HepG2 (cell line): ENCODE measurements at regions of chr9 and their contacts with region 1.

Region 1: GRCh38 chr9:104927912-104928740 is at the start of gene ABCA1:
- DNase-seq: peak; percentile 85
- ATAC-seq: peak; percentile 66
- H3K4me3 ChIP-seq: peak within 1 kb of the TSS; percentile 70 to 86 (median 85)
- H3K27ac ChIP-seq: peak within 1 kb of the TSS; percentile 79
- H3K4me1 ChIP-seq: peaks cover 51% of the 10 kb centered on the region
- H3K27me3 ChIP-seq: no peaks in the 10 kb centered on the region; a peak in 1 of 5 replicates
- CTCF ChIP-seq: no peak
- EP300 ChIP-seq: 0 out of 4 replicates have a peak, but pooled peaks of 1 of the 2 experiments have one; percentile 20
- POLR2A ChIP-seq: peak; percentile 81 to 94
- RAD21 ChIP-seq: 0 out of 2 replicates have a peak, but pooled peaks have one; percentile 20
- total RNA-seq, gene ABCA1: 40.0 and 63.8 TPM in 2 replicates

Region 2: DNA sequence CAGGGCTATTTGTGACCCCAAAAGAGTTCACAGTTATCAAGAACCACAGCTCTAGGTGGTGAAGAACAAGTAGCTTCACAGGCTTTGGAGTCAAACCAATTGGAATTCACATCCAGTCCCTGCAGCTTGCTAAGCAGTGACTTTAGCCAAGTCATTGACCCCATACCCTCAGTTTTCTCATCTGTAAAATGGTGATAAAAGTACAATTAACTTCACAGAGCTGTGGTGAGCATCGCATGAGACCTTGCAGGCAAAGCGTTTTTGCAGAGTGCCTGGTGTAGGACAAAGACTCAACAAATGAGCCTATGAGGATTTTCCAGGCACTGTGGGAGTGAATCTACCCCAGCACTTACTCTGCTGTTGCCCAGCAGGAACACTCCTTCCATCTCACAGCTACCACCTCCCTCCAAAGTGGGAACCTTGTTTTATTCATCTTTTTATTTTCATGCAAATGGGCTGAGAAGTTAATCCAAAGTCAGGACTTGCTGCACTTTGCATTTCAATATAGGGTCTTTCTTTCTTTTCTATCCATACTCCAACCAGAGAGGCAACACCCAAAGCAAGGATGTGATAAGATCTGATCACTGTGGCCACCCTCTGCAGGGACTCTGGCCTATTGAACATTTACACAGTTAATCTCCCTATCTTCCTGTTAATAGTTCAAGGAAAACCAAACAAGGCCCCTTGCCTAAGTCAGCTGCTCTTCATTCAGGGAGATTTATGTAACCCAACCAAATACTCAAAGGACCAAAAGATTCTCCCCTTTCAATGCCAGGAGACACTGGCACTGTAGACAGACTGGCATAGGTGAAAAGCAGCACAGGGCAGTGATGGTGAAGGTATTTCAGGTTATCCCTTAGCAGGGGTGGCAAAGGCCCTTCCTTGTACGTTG is 42.1 kb before region 1 on chr9:
- CTCF ChIA-PET with region 1: no interaction called
- POLR2A ChIA-PET with region 1: interaction called, 19 read pairs
- in situ Hi-C with region 1: no loop called
- intact Hi-C with region 1: loop called (anchors 1 kb)
- DNase-seq: peak; percentile 93
- ATAC-seq: peak; percentile 72
- H3K4me3 ChIP-seq: peak overlapping the region in 1 of 3 experiments; percentile 49; a peak in 1 of 6 replicates
- H3K27ac ChIP-seq: peak overlapping the region; percentile 85
- H3K4me1 ChIP-seq: peaks cover 97% of the 10 kb centered on the region
- H3K27me3 ChIP-seq: no peaks in the 10 kb centered on the region
- CTCF ChIP-seq: no peak
- EP300 ChIP-seq: peak; percentile 76 to 98; a peak in 3 of 4 replicates
- POLR2A ChIP-seq: peak; percentile 33; a peak in 1 of 4 replicates
- RAD21 ChIP-seq: no peak

Region 3: DNA sequence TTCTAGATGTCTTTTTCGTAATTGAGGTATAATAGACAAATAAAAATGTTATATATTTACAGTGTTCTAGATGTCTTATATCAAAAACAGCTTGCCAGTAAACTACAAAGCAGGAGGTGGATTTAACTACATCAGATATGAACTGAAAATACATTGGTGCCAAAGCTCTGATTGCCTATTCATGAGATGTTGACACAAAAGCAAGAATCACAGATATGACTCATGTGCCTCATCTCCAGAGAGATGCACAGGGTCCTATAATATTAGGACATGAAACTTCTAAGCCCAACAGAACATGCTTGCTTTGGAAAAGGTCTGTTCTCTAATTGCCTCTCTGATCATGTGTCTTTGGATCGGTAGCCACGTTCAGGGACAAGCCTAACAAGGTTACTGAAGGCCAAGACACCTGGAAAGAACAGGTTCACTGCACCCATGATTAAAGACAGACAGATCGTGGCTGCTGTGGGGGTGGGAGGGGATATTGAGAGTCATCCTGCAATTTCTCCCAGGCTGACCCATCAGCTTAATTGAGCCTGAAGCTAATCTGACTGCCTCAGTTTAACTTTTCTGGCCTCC is 17.0 kb before region 1 on chr9:
- CTCF ChIA-PET with region 1: no interaction called
- POLR2A ChIA-PET with region 1: interaction called, 19 read pairs
- in situ Hi-C with region 1: no loop called
- intact Hi-C with region 1: no loop called
- DNase-seq: peak; percentile 43
- ATAC-seq: no peak
- H3K4me3 ChIP-seq: no peak overlapping the region
- H3K27ac ChIP-seq: peak overlapping the region; percentile 76
- H3K4me1 ChIP-seq: peaks cover 100% of the 10 kb centered on the region
- H3K27me3 ChIP-seq: no peaks in the 10 kb centered on the region
- CTCF ChIP-seq: no peak
- EP300 ChIP-seq: no peak
- POLR2A ChIP-seq: no peak
- RAD21 ChIP-seq: no peak

Region 4: DNA sequence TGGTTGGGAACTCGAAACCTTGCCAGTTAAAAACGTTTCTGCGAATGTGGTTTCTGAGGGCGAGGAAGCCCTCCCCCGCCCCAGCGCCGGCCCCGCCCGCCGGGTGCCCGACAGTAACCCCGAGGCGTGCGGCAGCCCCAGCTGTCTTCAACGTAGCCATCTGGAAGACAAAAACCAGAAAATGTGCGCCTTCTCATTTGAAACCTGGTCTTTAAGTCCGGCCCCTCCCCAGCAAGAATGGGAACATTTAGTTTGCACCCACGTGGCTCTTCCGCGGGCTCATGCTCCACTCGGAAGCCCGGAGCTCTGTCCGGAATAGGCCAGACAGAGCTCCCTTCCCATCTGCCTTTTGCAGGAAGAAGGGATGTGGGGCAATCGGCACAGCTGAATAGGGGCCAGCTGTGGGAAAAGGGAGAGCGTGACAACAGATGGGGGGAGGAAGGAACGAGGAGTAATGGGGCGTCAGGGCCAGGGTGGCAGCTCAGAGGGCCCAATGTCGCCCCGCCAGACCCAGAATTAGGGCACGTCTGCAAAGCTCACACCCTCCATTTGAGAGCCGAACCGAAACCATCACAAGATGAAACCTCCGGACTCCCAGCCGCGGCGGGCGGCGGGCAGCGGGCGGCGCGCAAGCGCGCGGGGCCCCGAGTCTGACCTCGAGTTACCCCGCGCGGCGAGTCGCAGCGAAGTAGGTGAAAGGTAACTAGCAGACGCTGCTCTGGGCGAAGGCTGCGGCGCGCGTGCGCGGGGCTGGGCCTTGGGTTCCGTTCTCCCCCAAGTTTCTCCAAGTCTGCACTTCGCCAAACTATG is 63.2 kb after region 1 on chr9:
- CTCF ChIA-PET with region 1: no interaction called
- POLR2A ChIA-PET with region 1: interaction called, 8 read pairs
- in situ Hi-C with region 1: no loop called
- intact Hi-C with region 1: loop called (anchors 1 kb)
- DNase-seq: peak; percentile 61
- ATAC-seq: peak; percentile 85
- H3K4me3 ChIP-seq: peak overlapping the region; percentile 62 to 83 (median 71)
- H3K27ac ChIP-seq: peak overlapping the region; percentile 45
- H3K4me1 ChIP-seq: peaks cover 35% of the 10 kb centered on the region
- H3K27me3 ChIP-seq: no peaks in the 10 kb centered on the region
- CTCF ChIP-seq: no peak; the same call in 1 of the 2 replicates
- EP300 ChIP-seq: no peak
- POLR2A ChIP-seq: peak in 1 of 2 experiments; percentile 42; a peak in 1 of 4 replicates
- RAD21 ChIP-seq: no peak

Region 5: GRCh38 chr9:105157130-105157583 is 229.0 kb after region 1 on chr9:
- CTCF ChIA-PET with region 1: interaction called, 7 read pairs
- POLR2A ChIA-PET with region 1: interaction called, 3 read pairs
- in situ Hi-C with region 1: loop called (anchors 10 kb)
- intact Hi-C with region 1: loop called (anchors 1 kb)
- DNase-seq: peak; percentile 24
- ATAC-seq: peak; percentile 92
- H3K4me3 ChIP-seq: no peak overlapping the region
- H3K27ac ChIP-seq: no peak overlapping the region
- H3K4me1 ChIP-seq: peaks cover 24% of the 10 kb centered on the region
- H3K27me3 ChIP-seq: no peaks in the 10 kb centered on the region
- CTCF ChIP-seq: peak; percentile 74
- EP300 ChIP-seq: no peak
- POLR2A ChIP-seq: no peak
- RAD21 ChIP-seq: peak; percentile 41; the same call in 1 of the 2 replicates